Activated B cell treated with CpG ODN at 0.5 μM for 24 hours (primary cell): ENCODE measurements at regions of chr5 and their contacts with region 1.

Region 1: GRCh38 chr5:66144074-66144833 is at the start of gene SREK1:
- DNase-seq: peak; percentile 84
- ATAC-seq: peak; percentile 86
- H3K4me3 Mint-ChIP-seq: peak within 1 kb of the TSS; percentile 99
- H3K27ac Mint-ChIP-seq: peak within 1 kb of the TSS; percentile 100
- H3K4me1 Mint-ChIP-seq: peaks cover 33% of the 10 kb centered on the region
- H3K27me3 Mint-ChIP-seq: no peaks in the 10 kb centered on the region
- CTCF ChIP-seq: no peak
- total RNA-seq, gene SREK1: 78.2 and 104 TPM in 2 replicates

Region 2: DNA sequence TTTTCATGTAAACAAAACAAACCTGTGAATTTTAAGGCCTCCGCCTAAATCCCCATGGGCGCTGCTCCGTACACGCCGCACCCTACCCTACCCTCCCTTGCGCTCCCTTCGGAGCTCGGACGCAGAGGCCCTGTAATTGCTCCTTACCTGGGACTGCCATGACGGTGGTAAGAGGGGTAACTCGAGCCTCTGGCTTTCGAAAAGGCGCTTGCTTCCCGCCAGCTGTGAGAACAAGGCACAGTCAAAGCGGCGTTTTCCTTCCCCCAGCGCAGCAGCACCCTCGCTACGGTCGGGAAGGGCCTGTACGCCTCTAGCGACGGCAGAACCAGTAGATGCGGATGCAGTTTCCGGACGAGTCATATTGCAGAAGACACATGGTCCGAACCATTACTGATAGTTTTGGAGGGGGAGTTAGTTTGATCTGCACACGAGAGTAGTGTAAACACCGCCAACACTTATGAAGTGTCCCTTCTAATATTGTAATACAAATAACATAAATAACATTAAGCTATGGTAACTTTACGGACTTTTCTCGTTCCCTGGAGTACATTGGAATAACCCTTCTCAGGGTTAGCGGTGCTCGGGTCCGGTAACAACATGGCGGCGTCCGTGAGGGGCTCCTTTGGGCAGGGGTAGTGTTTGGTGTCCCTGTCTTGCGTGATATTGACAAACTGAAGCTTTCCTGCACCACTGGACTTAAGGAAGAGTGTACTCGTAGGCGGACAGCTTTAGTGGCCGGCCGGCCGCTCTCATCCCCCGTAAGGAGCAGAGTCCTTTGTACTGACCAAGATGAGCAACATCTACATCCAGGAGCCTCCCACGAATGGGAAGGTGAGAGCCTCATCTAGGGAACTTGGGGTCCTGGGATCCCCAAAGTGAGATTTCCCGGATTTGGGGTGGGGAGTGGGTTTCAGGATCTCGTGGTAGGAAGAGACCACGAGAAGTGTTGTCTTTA is 1375.6 kb before region 1 on chr5 and contains the starts of genes CWC27 and SREK1IP1:
- CTCF ChIA-PET with region 1: no interaction called
- POLR2A ChIA-PET with region 1: no interaction called
- intact Hi-C with region 1: loop called (anchors 10 kb)
- DNase-seq: peak; percentile 69
- ATAC-seq: peak; percentile 95
- H3K4me3 Mint-ChIP-seq: peak within 1 kb of the TSS; percentile 100
- H3K27ac Mint-ChIP-seq: peak within 1 kb of the TSS; percentile 99
- H3K4me1 Mint-ChIP-seq: peaks cover 62% of the 10 kb centered on the region
- H3K27me3 Mint-ChIP-seq: no peaks in the 10 kb centered on the region
- CTCF ChIP-seq: no peak
- total RNA-seq, gene CWC27: 28.9 and 29.2 TPM in 2 replicates
- total RNA-seq, gene SREK1IP1: 21.7 and 22.2 TPM in 2 replicates

Region 3: GRCh38 chr5:65624571-65625555 is 519.4 kb before region 1 on chr5 and contains the starts of genes SHLD3 and TRAPPC13:
- CTCF ChIA-PET with region 1: no interaction called
- POLR2A ChIA-PET with region 1: interaction called, 8 read pairs
- intact Hi-C with region 1: loop called (anchors 1 kb)
- DNase-seq: peak; percentile 58
- ATAC-seq: peak; percentile 74
- H3K4me3 Mint-ChIP-seq: peak within 1 kb of the TSS; percentile 99
- H3K27ac Mint-ChIP-seq: peak within 1 kb of the TSS; percentile 98
- H3K4me1 Mint-ChIP-seq: peaks cover 43% of the 10 kb centered on the region
- H3K27me3 Mint-ChIP-seq: no peaks in the 10 kb centered on the region
- CTCF ChIP-seq: no peak
- total RNA-seq, gene SHLD3: 5.7 and 6.2 TPM in 2 replicates
- total RNA-seq, gene TRAPPC13: 19.3 and 29.0 TPM in 2 replicates

Region 4: GRCh38 chr5:65651144-65651543 is 493.1 kb before region 1 on chr5:
- CTCF ChIA-PET with region 1: no interaction called
- POLR2A ChIA-PET with region 1: no interaction called
- intact Hi-C with region 1: no loop called
- DNase-seq: no peak
- ATAC-seq: no peak
- H3K4me3 Mint-ChIP-seq: no peak overlapping the region
- H3K27ac Mint-ChIP-seq: no peak overlapping the region
- H3K4me1 Mint-ChIP-seq: no peaks in the 10 kb centered on the region
- H3K27me3 Mint-ChIP-seq: no peaks in the 10 kb centered on the region
- CTCF ChIP-seq: no peak

Region 5: DNA sequence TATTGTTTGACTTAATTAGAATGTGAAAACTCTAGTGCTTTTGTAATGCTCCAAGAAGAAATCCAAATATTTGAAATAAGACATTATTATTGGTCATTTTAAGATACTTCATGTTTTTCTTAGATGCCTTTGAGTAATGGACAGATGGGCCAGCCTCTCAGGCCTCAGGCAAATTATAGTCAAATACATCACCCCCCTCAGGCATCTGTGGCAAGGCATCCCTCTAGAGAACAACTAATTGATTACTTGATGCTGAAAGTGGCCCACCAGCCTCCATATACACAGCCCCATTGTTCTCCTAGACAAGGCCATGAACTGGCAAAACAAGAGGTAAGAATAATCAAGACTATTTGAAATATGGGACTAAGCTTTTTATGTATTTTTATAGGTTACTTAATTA is 69.4 kb before region 1 on chr5:
- CTCF ChIA-PET with region 1: no interaction called
- POLR2A ChIA-PET with region 1: no interaction called
- intact Hi-C with region 1: loop called (anchors 5 kb)
- DNase-seq: no peak
- ATAC-seq: no peak
- H3K4me3 Mint-ChIP-seq: no peak overlapping the region
- H3K27ac Mint-ChIP-seq: no peak overlapping the region
- H3K4me1 Mint-ChIP-seq: no peaks in the 10 kb centered on the region
- H3K27me3 Mint-ChIP-seq: no peaks in the 10 kb centered on the region
- CTCF ChIP-seq: no peak

Region 6: GRCh38 chr5:66367814-66368541 is 223.7 kb after region 1 on chr5:
- CTCF ChIA-PET with region 1: no interaction called
- POLR2A ChIA-PET with region 1: no interaction called
- intact Hi-C with region 1: no loop called
- DNase-seq: no peak
- ATAC-seq: no peak
- H3K4me3 Mint-ChIP-seq: no peak overlapping the region
- H3K27ac Mint-ChIP-seq: no peak overlapping the region
- H3K4me1 Mint-ChIP-seq: no peaks in the 10 kb centered on the region
- H3K27me3 Mint-ChIP-seq: peaks cover 4% of the 10 kb centered on the region
- CTCF ChIP-seq: no peak

Region 7: DNA sequence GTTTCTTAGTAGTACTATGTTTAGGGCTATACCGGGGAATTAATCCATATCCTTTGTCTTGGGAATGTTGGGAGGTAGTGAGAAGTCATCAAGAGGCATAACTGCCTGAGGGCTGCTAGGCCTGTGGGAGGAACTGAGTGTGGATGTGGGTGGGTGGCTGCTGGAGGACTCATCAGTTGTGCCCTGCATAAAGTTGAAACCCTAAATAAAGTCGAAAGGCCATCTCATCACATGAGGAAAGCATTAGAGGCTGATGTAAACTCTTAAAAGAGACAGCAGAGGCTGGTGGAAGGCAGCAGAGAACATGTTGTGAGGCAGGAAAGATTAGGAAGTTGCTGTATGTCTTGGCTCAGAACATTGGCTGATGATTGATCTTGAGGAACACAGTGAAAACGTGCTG is 595.7 kb after region 1 on chr5:
- CTCF ChIA-PET with region 1: no interaction called
- POLR2A ChIA-PET with region 1: no interaction called
- intact Hi-C with region 1: no loop called
- DNase-seq: no peak
- ATAC-seq: no peak
- H3K4me3 Mint-ChIP-seq: no peak overlapping the region
- H3K27ac Mint-ChIP-seq: no peak overlapping the region
- H3K4me1 Mint-ChIP-seq: no peaks in the 10 kb centered on the region
- H3K27me3 Mint-ChIP-seq: no peaks in the 10 kb centered on the region
- CTCF ChIP-seq: no peak

Region 8: GRCh38 chr5:66779528-66779927 is 635.3 kb after region 1 on chr5:
- CTCF ChIA-PET with region 1: no interaction called
- POLR2A ChIA-PET with region 1: no interaction called
- intact Hi-C with region 1: no loop called
- DNase-seq: no peak
- ATAC-seq: no peak
- H3K4me3 Mint-ChIP-seq: no peak overlapping the region
- H3K27ac Mint-ChIP-seq: no peak overlapping the region
- H3K4me1 Mint-ChIP-seq: no peaks in the 10 kb centered on the region
- H3K27me3 Mint-ChIP-seq: peaks cover 3% of the 10 kb centered on the region
- CTCF ChIP-seq: no peak

Region 9: GRCh38 chr5:67003935-67004729 is 859.9 kb after region 1 on chr5:
- CTCF ChIA-PET with region 1: no interaction called
- POLR2A ChIA-PET with region 1: no interaction called
- intact Hi-C with region 1: loop called (anchors 1 kb)
- DNase-seq: peak; percentile 66
- ATAC-seq: peak; percentile 79
- H3K4me3 Mint-ChIP-seq: peak overlapping the region; percentile 87
- H3K27ac Mint-ChIP-seq: peak overlapping the region; percentile 72
- H3K4me1 Mint-ChIP-seq: peaks cover 30% of the 10 kb centered on the region
- H3K27me3 Mint-ChIP-seq: no peaks in the 10 kb centered on the region
- CTCF ChIP-seq: no peak